Activated CD8-positive, alpha-beta memory T cell treated with anti-CD3 and anti-CD28 coated beads, Interleukin-2, amount 10 ng/mL, durations not matched to agents 7 days and 5 days (primary cell): ENCODE measurements at regions of chr11 and their contacts with region 1.

Region 1: GRCh38 chr11:126480410-126481302 is 125.2 kb downstream of the ST3GAL4 start:
- DNase-seq: peak; percentile 83
- ATAC-seq: peak; percentile 76
- H3K4me3 Mint-ChIP-seq: peak overlapping the region; percentile 51
- H3K27ac Mint-ChIP-seq: peak overlapping the region; percentile 70
- H3K4me1 Mint-ChIP-seq: peaks cover 24% of the 10 kb centered on the region
- H3K27me3 Mint-ChIP-seq: no peaks in the 10 kb centered on the region

Region 2: DNA sequence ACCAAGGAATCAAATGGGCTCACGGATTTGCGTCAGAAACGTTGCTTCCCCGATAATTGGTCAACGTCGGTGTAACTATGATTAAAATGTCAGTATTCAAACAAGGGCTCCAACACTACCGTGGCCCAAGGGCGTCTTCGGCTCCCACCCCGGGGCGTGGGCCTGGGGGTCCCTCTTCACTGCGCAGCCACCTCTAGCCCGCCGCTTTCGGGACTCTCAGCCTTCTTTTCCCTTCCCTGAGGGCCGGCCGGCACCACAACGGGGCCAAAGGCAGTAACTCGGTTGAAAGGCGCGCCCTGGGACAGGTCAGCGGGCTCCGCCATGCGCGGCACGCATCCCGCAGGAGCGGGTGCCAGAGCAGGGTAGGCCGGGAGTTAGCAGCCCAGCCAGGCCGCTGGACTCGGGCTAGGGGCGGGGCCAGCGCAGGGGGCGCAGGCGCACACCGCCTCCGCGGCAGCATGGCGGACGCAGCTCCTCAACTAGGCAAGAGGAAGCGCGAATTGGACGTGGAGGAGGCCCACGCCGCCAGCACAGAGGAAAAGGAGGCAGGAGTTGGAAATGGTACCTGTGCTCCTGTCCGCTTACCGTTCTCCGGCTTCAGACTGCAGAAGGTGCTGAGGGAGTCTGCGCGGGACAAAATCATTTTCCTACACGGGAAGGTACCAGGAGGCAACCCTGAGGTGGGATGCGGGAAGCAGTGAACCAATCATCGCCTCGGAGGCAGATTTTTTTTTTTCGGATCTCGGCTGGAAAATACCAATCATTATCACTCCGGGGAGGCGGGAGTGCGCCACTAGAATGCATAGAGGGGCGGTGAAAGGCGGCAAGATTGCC is 176.8 kb before region 1 on chr11 and contains the start of gene DCPS:
- CTCF ChIA-PET with region 1: interaction called, 44 read pairs
- DNase-seq: peak; percentile 91
- ATAC-seq: peak; percentile 98
- H3K4me3 Mint-ChIP-seq: peak within 1 kb of the TSS; percentile 90
- H3K27ac Mint-ChIP-seq: peak within 1 kb of the TSS; percentile 85
- H3K4me1 Mint-ChIP-seq: peaks cover 33% of the 10 kb centered on the region
- H3K27me3 Mint-ChIP-seq: no peaks in the 10 kb centered on the region
- total RNA-seq, gene DCPS: 40.6 to 41.9 TPM

Region 3: GRCh38 chr11:126310228-126310991 is 170.2 kb before region 1 on chr11:
- CTCF ChIA-PET with region 1: interaction called, 44 read pairs
- DNase-seq: peak; percentile 75
- ATAC-seq: peak; percentile 81
- H3K4me3 Mint-ChIP-seq: no peak overlapping the region
- H3K27ac Mint-ChIP-seq: no peak overlapping the region
- H3K4me1 Mint-ChIP-seq: peaks cover 43% of the 10 kb centered on the region
- H3K27me3 Mint-ChIP-seq: no peaks in the 10 kb centered on the region

Region 4: DNA sequence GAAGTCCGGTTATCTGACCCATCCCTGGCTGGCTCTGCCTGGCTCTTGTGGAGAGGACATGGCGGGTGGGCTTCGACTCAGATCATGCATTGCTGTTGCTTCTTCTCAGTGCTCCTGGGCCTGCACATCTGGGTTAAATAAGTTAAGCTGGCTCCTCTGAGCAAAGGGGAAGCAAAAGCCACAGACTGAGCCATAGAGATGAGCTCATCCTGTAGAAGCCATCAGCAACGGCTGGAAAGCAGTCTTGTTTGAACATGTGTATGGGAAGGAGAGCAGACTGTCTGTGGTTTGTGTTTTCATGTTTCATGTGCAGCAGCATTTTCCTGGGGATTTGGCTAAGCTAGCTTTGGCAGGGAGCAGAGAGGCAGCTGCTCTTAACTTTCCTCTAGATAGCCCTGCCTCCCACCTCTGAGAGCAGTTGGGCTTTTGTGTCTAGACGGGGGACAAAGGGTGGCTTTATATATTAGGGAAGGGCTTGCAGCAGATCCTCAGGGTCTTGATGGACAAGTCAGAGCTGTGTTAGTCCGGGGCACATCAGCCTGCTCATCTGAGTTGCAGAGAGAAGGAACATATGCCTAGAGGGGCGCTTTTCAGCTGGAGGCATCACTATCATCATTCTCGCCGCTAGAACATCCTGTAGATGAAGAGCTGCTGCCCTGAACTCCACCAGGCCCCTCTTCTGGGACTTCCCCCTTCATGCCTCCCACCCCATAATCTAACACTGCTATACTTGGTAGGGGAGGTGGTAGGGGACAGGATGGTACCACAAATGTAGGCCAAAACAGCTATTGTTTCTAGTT is 161.9 kb before region 1 on chr11:
- CTCF ChIA-PET with region 1: interaction called, 16 read pairs
- DNase-seq: peak; percentile 68
- ATAC-seq: peak; percentile 83
- H3K4me3 Mint-ChIP-seq: peak overlapping the region; percentile 34
- H3K27ac Mint-ChIP-seq: peak overlapping the region; percentile 88
- H3K4me1 Mint-ChIP-seq: peaks cover 40% of the 10 kb centered on the region
- H3K27me3 Mint-ChIP-seq: no peaks in the 10 kb centered on the region

Region 5: DNA sequence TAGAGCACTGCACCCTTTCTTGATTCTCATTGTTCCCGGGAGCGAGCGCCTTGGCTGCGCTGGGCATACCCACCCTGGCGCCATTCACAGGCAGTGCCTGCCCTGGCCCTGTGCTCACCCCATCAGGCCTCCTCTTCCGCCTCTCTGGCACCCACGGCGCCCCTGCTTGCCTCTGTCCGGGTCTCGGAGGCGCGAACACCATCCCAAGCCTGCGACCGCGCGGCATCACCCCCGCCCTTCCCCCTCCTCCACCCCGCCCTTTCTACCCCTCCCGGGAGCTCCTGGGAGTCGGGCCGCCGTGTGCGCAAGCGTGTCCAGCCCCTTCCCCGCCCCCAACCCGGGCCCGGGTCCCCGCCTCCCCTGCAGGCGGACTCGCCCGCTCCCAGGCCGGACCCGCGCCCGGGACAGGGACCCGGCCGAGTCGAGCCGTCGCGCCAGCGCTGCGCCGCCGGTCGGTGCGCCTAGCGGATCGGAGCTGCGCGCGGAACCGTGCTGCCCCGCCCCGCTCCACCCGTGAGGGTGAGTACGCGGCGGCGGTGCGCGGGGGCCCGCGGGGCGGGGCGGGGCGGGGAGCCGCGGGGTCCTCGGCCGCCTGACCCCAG is 125.2 kb before region 1 on chr11 and contains the start of gene ST3GAL4:
- CTCF ChIA-PET with region 1: interaction called, 14 read pairs
- DNase-seq: peak; percentile 83
- ATAC-seq: peak; percentile 75
- H3K4me3 Mint-ChIP-seq: peak within 1 kb of the TSS; percentile 97
- H3K27ac Mint-ChIP-seq: peak within 1 kb of the TSS; percentile 96
- H3K4me1 Mint-ChIP-seq: peaks cover 53% of the 10 kb centered on the region
- H3K27me3 Mint-ChIP-seq: no peaks in the 10 kb centered on the region
- total RNA-seq, gene ST3GAL4: 8.8 to 11.5 TPM

Region 6: GRCh38 chr11:126440792-126441514 is 39.7 kb before region 1 on chr11:
- CTCF ChIA-PET with region 1: interaction called, 109 read pairs
- DNase-seq: peak; percentile 78
- ATAC-seq: peak; percentile 79
- H3K4me3 Mint-ChIP-seq: no peak overlapping the region
- H3K27ac Mint-ChIP-seq: no peak overlapping the region
- H3K4me1 Mint-ChIP-seq: peaks cover 3% of the 10 kb centered on the region
- H3K27me3 Mint-ChIP-seq: peaks cover 15% of the 10 kb centered on the region

Region 7: DNA sequence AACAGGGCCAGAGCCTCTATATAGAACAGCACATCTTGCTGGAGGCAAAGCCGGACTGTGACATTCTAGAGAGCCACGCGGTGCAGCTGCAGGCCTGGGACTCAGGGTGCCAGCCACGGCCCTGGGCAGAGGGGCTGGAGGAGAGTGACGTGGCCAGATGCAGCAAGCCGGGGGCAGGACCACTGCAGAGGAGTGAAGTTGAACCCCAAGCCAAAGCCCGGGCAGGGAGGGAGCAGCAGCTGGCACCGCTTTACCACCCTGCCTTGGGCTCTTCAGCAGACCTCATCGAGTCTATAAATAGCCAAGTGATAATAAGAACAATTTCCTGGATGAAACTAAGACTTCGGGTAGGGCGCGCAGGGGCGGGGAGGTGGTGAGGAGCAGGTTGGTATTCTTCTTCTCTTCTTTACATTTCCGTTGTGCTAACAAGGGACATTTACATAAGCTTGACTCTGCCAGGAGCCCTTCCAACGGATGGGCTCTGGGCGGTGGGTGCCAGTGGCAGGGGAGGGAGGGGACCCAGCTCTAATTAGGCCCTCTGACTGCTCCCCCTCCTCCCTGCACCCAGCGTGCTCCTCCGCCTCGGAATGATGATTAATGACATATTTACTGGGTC is 15.0 kb before region 1 on chr11:
- CTCF ChIA-PET with region 1: interaction called, 28 read pairs
- DNase-seq: peak; percentile 64
- ATAC-seq: peak; percentile 76
- H3K4me3 Mint-ChIP-seq: no peak overlapping the region
- H3K27ac Mint-ChIP-seq: peak overlapping the region; percentile 65
- H3K4me1 Mint-ChIP-seq: peaks cover 20% of the 10 kb centered on the region
- H3K27me3 Mint-ChIP-seq: peaks cover 13% of the 10 kb centered on the region